Left colon (tissue), 2 donors: ENCODE measurements at regions of chr6 and their contacts with region 1.

Region 1: DNA sequence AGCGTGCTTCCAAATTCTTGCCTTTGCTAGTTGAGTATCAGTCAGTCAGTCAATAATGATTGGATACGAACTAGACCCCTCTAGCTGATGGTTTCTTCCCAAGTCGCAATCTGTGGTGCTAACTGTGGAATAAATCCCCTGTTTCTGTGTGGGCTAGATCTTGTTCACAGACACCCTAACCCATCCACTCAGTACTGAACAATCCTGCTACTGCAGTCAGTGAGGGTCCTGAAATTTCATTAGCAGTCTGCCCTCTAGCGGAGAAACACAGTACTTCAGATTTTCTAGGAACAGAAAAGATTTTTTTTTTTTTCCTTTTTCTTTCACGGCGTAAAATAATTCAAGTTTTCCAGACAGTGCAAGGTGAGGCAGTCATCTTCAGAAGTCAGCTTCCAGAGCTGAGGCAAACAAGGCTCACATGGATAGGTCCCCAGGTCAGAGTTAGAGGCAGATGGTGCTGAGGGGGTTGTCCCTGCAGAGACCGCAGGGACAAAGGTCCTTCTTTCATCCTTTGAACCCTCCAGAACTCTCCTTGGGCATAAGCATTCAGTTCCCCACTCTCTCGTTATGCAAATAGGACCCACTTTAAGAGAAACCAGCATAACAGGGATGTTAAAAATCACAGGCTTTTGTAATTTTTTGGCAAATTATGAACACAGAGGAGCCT is 119.6 kb downstream of the SCML4 start:
- DNase-seq: no peak
- ATAC-seq: no peak

Region 2: DNA sequence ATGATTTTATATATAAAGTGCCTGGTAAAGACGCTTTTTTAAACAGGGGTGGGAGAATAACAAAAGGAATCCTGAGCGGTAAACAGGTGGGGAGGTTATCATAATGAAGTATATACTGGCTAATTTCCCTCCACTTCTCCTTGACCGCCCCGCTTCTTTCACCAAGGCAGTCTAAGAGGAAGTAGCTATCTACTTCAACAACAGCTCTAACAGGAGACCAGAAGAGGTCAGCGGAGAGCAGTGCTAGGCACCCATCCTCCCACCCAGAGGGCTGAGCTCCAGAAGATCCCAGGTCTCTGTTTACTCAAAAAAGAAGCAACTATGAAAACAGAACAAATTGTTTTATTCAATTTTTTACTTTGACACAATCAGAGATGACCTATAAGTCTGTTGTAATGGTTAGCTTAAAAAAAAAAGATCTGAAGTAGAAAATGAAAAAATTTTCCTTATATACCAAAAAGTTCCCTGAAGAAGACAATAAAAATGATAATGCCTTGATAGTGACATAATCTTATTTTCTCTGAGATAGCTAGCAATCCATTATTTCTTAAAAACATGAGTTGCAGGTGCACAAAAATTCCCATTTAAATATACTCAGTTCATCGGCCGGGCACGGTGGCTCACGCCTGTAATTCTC is 386.3 kb before region 1 on chr6:
- intact Hi-C with region 1: loop called in 1 of 2 experiments (anchors 10 kb)
- DNase-seq: peak; percentile 46 to 58
- ATAC-seq: peak; percentile 99

Region 3: GRCh38 chr6:107506145-107506544 is 198.3 kb before region 1 on chr6:
- intact Hi-C with region 1: no loop called
- DNase-seq: no peak
- ATAC-seq: peak; percentile 46

Region 4: GRCh38 chr6:108186226-108186625 is 481.7 kb after region 1 on chr6:
- intact Hi-C with region 1: no loop called
- DNase-seq: peak in 1 of 2 donors; percentile 39
- ATAC-seq: peak; percentile 94

Region 5: DNA sequence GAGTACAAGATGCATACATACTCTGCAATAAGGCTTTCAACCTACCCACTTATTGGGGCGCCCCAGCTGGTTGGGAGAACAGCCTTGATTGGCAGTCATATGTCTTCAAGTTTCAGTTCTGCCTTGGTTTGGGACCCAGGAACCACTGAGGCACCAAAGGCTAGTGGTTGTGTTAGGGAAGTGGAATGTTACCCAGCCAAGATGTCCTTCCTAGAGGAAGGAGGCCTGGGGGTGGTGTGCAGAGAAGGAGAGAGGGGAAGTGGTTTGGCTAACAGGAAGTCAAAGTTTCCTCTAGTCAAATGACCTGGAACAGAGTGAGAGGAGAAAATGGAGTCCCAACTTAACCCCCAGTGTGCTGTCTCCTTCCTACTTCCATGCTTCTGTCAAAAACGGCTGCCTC is 1618.3 kb after region 1 on chr6:
- intact Hi-C with region 1: no loop called
- DNase-seq: no peak
- ATAC-seq: no peak